OCI-LY7 (cell line): ENCODE measurements at regions of chr1 and their contacts with region 1.

Region 1: DNA sequence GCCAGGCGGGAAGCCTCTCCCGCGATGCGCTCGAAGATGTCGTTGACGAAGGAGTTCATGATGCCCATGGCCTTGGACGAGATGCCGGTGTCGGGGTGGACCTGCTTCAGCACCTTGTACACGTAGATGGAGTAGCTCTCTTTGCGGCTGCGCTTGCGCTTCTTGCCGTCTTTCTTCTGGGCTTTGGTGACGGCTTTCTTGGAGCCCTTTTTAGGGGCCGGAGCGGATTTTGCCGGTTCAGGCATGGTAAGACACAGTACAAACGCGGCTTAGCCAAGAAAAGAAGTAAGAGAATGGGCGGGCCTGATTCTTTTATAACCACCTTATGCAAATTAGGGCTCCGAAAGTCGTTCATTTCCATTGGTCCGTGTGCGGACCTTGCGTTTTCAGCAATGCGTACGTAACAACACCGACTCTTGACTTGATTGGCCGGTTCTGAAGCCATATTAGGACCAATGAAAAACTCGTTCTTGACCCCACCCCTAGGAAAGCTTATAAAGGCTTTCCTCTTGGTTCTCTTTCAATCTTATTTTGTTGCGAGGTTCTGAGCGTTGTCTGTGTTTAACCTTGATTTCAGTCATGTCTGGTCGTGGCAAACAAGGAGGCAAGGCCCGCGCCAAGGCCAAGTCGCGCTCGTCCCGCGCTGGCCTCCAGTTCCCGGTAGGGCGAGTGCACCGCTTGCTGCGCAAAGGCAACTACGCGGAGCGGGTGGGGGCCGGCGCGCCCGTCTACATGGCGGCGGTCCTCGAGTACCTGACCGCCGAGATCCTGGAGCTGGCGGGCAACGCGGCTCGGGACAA is 12.8 kb upstream of the BOLA1 start:
- DNase-seq: peak; percentile 99
- H3K4me3 ChIP-seq: peak overlapping the region; percentile 85
- H3K27ac ChIP-seq: peak overlapping the region; percentile 98
- H3K4me1 ChIP-seq: peaks cover 48% of the 10 kb centered on the region
- CTCF ChIP-seq: no peak

Region 2: GRCh38 chr1:149844101-149844500 is 42.5 kb before region 1 on chr1:
- CTCF ChIA-PET with region 1: no interaction called
- POLR2A ChIA-PET with region 1: interaction called, 63 read pairs
- intact Hi-C with region 1: no loop called
- DNase-seq: peak; percentile 70
- H3K4me3 ChIP-seq: peak overlapping the region; percentile 96
- H3K27ac ChIP-seq: peak overlapping the region; percentile 87
- H3K4me1 ChIP-seq: peaks cover 40% of the 10 kb centered on the region
- CTCF ChIP-seq: no peak

Region 3: GRCh38 chr1:149849947-149850360 is 36.6 kb before region 1 on chr1:
- CTCF ChIA-PET with region 1: no interaction called
- POLR2A ChIA-PET with region 1: interaction called, 63 read pairs
- intact Hi-C with region 1: no loop called
- DNase-seq: peak; percentile 59
- H3K4me3 ChIP-seq: peak overlapping the region; percentile 96
- H3K27ac ChIP-seq: peak overlapping the region; percentile 87
- H3K4me1 ChIP-seq: peaks cover 39% of the 10 kb centered on the region
- CTCF ChIP-seq: no peak

Region 4: GRCh38 chr1:149927503-149928387 is 41.1 kb after region 1 on chr1 and contains the start of gene SF3B4:
- CTCF ChIA-PET with region 1: no interaction called
- POLR2A ChIA-PET with region 1: interaction called, 16 read pairs
- intact Hi-C with region 1: loop called (anchors 2 kb)
- DNase-seq: peak; percentile 96
- H3K4me3 ChIP-seq: peak within 1 kb of the TSS; percentile 81
- H3K27ac ChIP-seq: peak within 1 kb of the TSS; percentile 89
- H3K4me1 ChIP-seq: peaks cover 37% of the 10 kb centered on the region
- CTCF ChIP-seq: no peak
- total RNA-seq, gene SF3B4: 16.7 and 18.0 TPM in 2 replicates

Region 5: DNA sequence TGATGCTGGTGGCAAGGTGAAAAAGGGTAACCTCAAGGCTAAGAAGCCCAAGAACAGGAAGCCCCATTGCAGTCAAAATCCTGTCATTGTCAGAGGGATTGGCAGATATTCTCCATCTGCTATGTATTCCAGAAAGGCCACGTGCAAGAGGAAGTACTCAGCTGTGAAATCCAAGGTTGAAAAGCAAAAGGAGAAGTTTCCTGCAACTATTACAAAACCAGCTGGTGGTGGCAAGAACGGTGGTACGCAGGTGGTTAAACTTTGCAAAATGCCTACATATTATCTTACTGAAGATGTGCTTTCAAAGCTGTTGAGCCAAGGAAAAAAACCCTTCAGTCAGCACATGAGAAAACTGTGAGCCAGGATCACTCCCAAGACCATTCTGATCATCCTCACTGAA is 167.3 kb after region 1 on chr1:
- CTCF ChIA-PET with region 1: no interaction called
- POLR2A ChIA-PET with region 1: interaction called, 5 read pairs
- intact Hi-C with region 1: loop called (anchors 1 kb)
- DNase-seq: peak; percentile 6
- H3K4me3 ChIP-seq: no peak overlapping the region
- H3K27ac ChIP-seq: no peak overlapping the region
- H3K4me1 ChIP-seq: peaks cover 19% of the 10 kb centered on the region
- CTCF ChIP-seq: no peak

Region 6: DNA sequence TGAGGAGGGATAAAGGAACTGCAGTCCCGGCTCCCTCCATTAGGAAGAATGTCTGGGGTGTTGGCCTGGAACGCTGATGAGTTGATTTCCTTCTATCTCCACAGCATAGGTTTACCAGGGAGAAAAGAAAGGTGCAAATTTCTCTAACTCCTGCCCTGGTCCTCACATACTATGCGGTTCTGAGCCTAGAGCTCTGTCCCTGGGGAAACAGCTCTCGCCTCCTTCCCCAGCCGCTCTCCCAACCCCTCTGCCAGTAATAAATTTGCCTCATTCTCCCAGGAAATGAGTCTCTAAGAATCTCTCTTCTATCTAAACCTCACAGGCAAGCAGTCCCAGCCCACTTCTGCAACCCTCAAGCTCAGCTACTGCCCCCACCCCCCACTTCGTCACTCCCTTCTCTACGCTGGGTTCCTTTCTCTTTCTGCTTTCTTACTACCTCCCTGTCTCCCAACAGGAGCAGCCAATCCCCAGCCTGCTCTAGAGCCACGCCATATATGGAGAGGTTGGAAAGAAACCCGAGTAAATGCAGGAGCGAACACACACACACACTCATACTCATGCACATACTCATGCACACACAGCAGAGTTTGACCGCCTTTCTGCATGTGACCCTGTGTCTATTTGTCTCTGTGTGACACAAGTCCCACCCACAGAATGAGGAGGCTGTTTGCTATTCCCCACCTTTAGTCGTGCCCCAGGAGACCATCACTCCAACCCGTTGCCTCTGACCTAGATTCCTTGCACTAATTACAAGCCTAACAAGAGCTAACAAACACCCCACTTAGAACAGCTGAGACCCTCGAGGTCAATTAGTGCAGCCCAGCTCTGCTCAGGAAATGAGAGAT is 276.5 kb after region 1 on chr1:
- CTCF ChIA-PET with region 1: no interaction called
- POLR2A ChIA-PET with region 1: interaction called, 5 read pairs
- intact Hi-C with region 1: loop called (anchors 10 kb)
- DNase-seq: peak; percentile 49
- H3K4me3 ChIP-seq: peak overlapping the region; percentile 44
- H3K27ac ChIP-seq: peak overlapping the region; percentile 99
- H3K4me1 ChIP-seq: peaks cover 81% of the 10 kb centered on the region
- CTCF ChIP-seq: no peak

Region 7: DNA sequence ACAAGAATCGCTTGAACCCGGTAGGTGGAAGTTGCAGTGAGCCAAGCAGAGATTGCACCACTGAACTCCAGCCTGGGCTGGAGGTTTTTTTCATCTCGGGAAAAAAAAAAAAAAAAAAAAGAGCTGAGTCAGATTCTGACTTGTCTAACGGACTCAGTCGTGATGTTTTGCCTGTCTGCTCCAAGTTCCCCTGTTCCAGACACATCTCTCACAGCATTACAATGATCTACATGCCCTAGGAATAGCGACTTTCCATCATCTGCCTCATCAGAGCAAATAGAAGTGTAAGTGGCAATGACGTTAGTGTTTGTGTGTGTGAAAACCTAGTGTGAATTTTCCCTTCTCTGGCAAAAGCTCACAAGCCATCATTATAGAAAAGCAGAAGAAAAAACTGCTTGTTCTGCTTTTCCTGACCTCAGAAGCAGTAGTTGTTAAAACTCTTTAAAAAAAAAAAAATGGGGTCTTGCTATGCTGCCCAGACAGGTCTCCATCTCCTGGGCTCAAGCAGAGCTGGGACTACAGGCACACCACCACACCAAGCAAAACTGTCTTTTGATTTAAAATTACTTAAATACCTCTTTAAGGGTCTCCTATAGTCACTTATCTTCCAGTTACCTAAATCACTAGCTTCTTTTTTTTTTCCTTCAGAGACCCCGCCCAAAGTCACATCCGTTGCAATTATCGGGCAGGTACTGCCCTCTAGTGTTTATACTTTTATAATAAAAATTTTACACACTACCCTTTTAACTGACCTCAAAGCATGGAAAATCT is 300.4 kb after region 1 on chr1:
- CTCF ChIA-PET with region 1: no interaction called
- POLR2A ChIA-PET with region 1: interaction called, 18 read pairs
- intact Hi-C with region 1: loop called (anchors 5 kb)
- DNase-seq: peak; percentile 80
- H3K4me3 ChIP-seq: no peak overlapping the region
- H3K27ac ChIP-seq: no peak overlapping the region
- H3K4me1 ChIP-seq: peaks cover 11% of the 10 kb centered on the region
- CTCF ChIP-seq: peak; percentile 89